ENCODE measurements at regions of chr6 and their contacts with region 1.

Region 1: GRCh38 chr6:112560651-112561050 is 213.5 kb downstream of the RFPL4B start:
- DNase-seq: peak in 1 of 2 experiments; percentile 20
- H3K4me3 ChIP-seq: no peak overlapping the region
- H3K4me3 Mint-ChIP-seq: no peak overlapping the region
- H3K27ac Mint-ChIP-seq: no peak overlapping the region
- H3K4me1 ChIP-seq: peaks cover 7% of the 10 kb centered on the region; the same call in 1 of the 2 replicates
- H3K4me1 Mint-ChIP-seq: peaks cover 17% of the 10 kb centered on the region
- H3K27me3 ChIP-seq: no peaks in the 10 kb centered on the region
- H3K27me3 Mint-ChIP-seq: peaks cover 3% of the 10 kb centered on the region
- CTCF ChIP-seq: peak in 1 of 2 experiments; percentile 56

Region 2: GRCh38 chr6:112337209-112337638 is 223.4 kb before region 1 on chr6:
- CTCF ChIA-PET with region 1: no interaction called
- POLR2A ChIA-PET with region 1: no interaction called
- intact Hi-C with region 1: loop called (anchors 1 kb)
- DNase-seq: peak; percentile 51 to 52
- H3K4me3 ChIP-seq: no peak overlapping the region
- H3K4me3 Mint-ChIP-seq: no peak overlapping the region
- H3K27ac Mint-ChIP-seq: no peak overlapping the region
- H3K4me1 ChIP-seq: no peaks in the 10 kb centered on the region
- H3K4me1 Mint-ChIP-seq: no peaks in the 10 kb centered on the region
- H3K27me3 ChIP-seq: no peaks in the 10 kb centered on the region
- H3K27me3 Mint-ChIP-seq: peaks cover 2% of the 10 kb centered on the region
- CTCF ChIP-seq: peak; percentile 69 to 80

Region 3: GRCh38 chr6:112400282-112400681 is 160.4 kb before region 1 on chr6:
- CTCF ChIA-PET with region 1: no interaction called
- POLR2A ChIA-PET with region 1: no interaction called
- intact Hi-C with region 1: no loop called
- DNase-seq: no peak
- H3K4me3 ChIP-seq: no peak overlapping the region
- H3K4me3 Mint-ChIP-seq: no peak overlapping the region
- H3K27ac Mint-ChIP-seq: no peak overlapping the region
- H3K4me1 ChIP-seq: no peaks in the 10 kb centered on the region
- H3K4me1 Mint-ChIP-seq: no peaks in the 10 kb centered on the region
- H3K27me3 ChIP-seq: no peaks in the 10 kb centered on the region
- H3K27me3 Mint-ChIP-seq: no peaks in the 10 kb centered on the region
- CTCF ChIP-seq: no peak

Region 4: GRCh38 chr6:112413805-112414204 is 146.8 kb before region 1 on chr6:
- CTCF ChIA-PET with region 1: no interaction called
- POLR2A ChIA-PET with region 1: no interaction called
- intact Hi-C with region 1: loop called (anchors 1 kb)
- DNase-seq: peak; percentile 10 to 36
- H3K4me3 ChIP-seq: no peak overlapping the region
- H3K4me3 Mint-ChIP-seq: no peak overlapping the region
- H3K27ac Mint-ChIP-seq: no peak overlapping the region
- H3K4me1 ChIP-seq: peaks cover 11% of the 10 kb centered on the region; the same call in 1 of the 2 replicates
- H3K4me1 Mint-ChIP-seq: peaks cover 7% of the 10 kb centered on the region
- H3K27me3 ChIP-seq: no peaks in the 10 kb centered on the region
- H3K27me3 Mint-ChIP-seq: no peaks in the 10 kb centered on the region
- CTCF ChIP-seq: no peak

Region 5: GRCh38 chr6:112429226-112429625 is 131.4 kb before region 1 on chr6:
- CTCF ChIA-PET with region 1: no interaction called
- POLR2A ChIA-PET with region 1: no interaction called
- intact Hi-C with region 1: loop called (anchors 1 kb)
- DNase-seq: peak in 1 of 2 experiments; percentile 46
- H3K4me3 ChIP-seq: no peak overlapping the region
- H3K4me3 Mint-ChIP-seq: no peak overlapping the region
- H3K27ac Mint-ChIP-seq: peak overlapping the region; percentile 47
- H3K4me1 ChIP-seq: no peaks in the 10 kb centered on the region
- H3K4me1 Mint-ChIP-seq: no peaks in the 10 kb centered on the region
- H3K27me3 ChIP-seq: no peaks in the 10 kb centered on the region
- H3K27me3 Mint-ChIP-seq: no peaks in the 10 kb centered on the region
- CTCF ChIP-seq: peak; percentile 28 to 55

Region 6: DNA sequence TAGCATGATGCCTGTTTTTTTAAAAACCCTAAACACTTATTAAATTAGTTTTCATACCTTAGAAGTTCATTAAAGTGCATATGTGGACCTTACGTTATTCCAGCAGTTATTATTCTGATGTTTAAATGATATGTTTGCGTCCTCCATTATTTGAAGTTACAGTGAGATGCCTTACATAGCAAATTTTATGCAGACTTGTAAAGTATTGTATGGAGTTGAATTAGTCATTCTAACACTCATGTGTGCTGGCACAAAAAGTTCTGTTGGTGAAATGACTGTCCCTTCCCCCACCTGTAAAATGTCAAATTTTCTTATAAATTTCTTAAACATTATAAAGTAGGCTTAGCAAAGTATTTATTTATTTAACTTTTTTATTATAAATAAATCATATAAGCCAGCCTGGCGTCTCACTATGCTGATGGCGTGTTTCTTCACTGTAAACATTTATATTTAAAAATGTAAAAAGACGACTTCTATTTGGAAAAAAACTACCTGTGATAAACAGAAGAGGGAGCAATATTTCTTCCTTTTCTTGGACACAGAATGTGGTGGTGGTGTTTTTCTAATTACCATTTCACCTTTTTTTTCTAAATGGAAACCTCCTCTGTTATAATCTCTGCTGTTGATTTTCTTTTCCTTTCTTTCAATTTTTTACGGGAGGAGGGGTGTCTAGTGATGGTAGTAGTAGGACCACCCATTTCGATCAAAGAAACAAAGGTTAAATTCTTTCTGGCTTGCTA is 58.1 kb before region 1 on chr6:
- CTCF ChIA-PET with region 1: no interaction called
- POLR2A ChIA-PET with region 1: no interaction called
- intact Hi-C with region 1: loop called (anchors 2 kb)
- DNase-seq: no peak
- H3K4me3 ChIP-seq: no peak overlapping the region
- H3K4me3 Mint-ChIP-seq: no peak overlapping the region
- H3K27ac Mint-ChIP-seq: no peak overlapping the region
- H3K4me1 ChIP-seq: no peaks in the 10 kb centered on the region
- H3K4me1 Mint-ChIP-seq: no peaks in the 10 kb centered on the region
- H3K27me3 ChIP-seq: no peaks in the 10 kb centered on the region
- H3K27me3 Mint-ChIP-seq: no peaks in the 10 kb centered on the region
- CTCF ChIP-seq: peak; percentile 5 to 16

Region 7: GRCh38 chr6:112743323-112743722 is 182.7 kb after region 1 on chr6:
- CTCF ChIA-PET with region 1: no interaction called
- POLR2A ChIA-PET with region 1: no interaction called
- intact Hi-C with region 1: no loop called
- DNase-seq: no peak
- H3K4me3 ChIP-seq: no peak overlapping the region
- H3K4me3 Mint-ChIP-seq: no peak overlapping the region
- H3K27ac Mint-ChIP-seq: no peak overlapping the region
- H3K4me1 ChIP-seq: no peaks in the 10 kb centered on the region
- H3K4me1 Mint-ChIP-seq: no peaks in the 10 kb centered on the region
- H3K27me3 ChIP-seq: no peaks in the 10 kb centered on the region
- H3K27me3 Mint-ChIP-seq: no peaks in the 10 kb centered on the region
- CTCF ChIP-seq: no peak

Region 8: GRCh38 chr6:113147544-113147943 is 586.9 kb after region 1 on chr6:
- CTCF ChIA-PET with region 1: no interaction called
- POLR2A ChIA-PET with region 1: no interaction called
- intact Hi-C with region 1: no loop called
- DNase-seq: no peak
- H3K4me3 ChIP-seq: no peak overlapping the region
- H3K4me3 Mint-ChIP-seq: no peak overlapping the region
- H3K27ac Mint-ChIP-seq: no peak overlapping the region
- H3K4me1 ChIP-seq: no peaks in the 10 kb centered on the region
- H3K4me1 Mint-ChIP-seq: no peaks in the 10 kb centered on the region
- H3K27me3 ChIP-seq: no peaks in the 10 kb centered on the region
- H3K27me3 Mint-ChIP-seq: no peaks in the 10 kb centered on the region
- CTCF ChIP-seq: no peak

Measured in Caco-2 (cell line).